ENCODE measurements at regions of chrX and their contacts with region 1.

Region 1: GRCh38 chrX:110450050-110450449 is 91.4 kb downstream of the RTL9 start:
- DNase-seq: peak; percentile 20
- ATAC-seq: peak; percentile 99
- H3K4me3 ChIP-seq: no peak overlapping the region
- H3K27ac ChIP-seq: no peak overlapping the region
- H3K4me1 ChIP-seq: no peaks in the 10 kb centered on the region
- H3K27me3 ChIP-seq: peaks cover 0 to 4% of the 10 kb centered on the region in 2 experiments; a peak in 2 of 4 replicates
- CTCF ChIP-seq: peak; percentile 78 to 85 (median 84)
- EP300 ChIP-seq: no peak
- POLR2A ChIP-seq: no peak
- RAD21 ChIP-seq: peak; percentile 89

Region 2: GRCh38 chrX:110358548-110358947 is 91.5 kb before region 1 on chrX and contains the start of gene RTL9:
- CTCF ChIA-PET with region 1: no interaction called
- POLR2A ChIA-PET with region 1: no interaction called
- RAD21 ChIA-PET with region 1: no interaction called
- SMC1A ChIA-PET with region 1: no interaction called
- in situ Hi-C with region 1: no loop called
- intact Hi-C with region 1: no loop called
- DNase-seq: no peak
- ATAC-seq: no peak
- H3K4me3 ChIP-seq: no peak within 1 kb of the TSS
- H3K27ac ChIP-seq: no peak within 1 kb of the TSS
- H3K4me1 ChIP-seq: no peaks in the 10 kb centered on the region
- H3K27me3 ChIP-seq: no peaks in the 10 kb centered on the region
- CTCF ChIP-seq: no peak
- EP300 ChIP-seq: no peak
- POLR2A ChIP-seq: no peak
- RAD21 ChIP-seq: no peak
- polyA plus RNA-seq, gene RTL9: 0.05 to 0.07 TPM

Region 3: GRCh38 chrX:110665223-110666002 is 215.4 kb after region 1 on chrX:
- CTCF ChIA-PET with region 1: no interaction called
- POLR2A ChIA-PET with region 1: no interaction called
- RAD21 ChIA-PET with region 1: no interaction called
- SMC1A ChIA-PET with region 1: no interaction called
- in situ Hi-C with region 1: no loop called
- intact Hi-C with region 1: loop called (anchors 1 kb)
- DNase-seq: no peak
- ATAC-seq: peak; percentile 97
- H3K4me3 ChIP-seq: no peak overlapping the region
- H3K27ac ChIP-seq: no peak overlapping the region
- H3K4me1 ChIP-seq: no peaks in the 10 kb centered on the region
- H3K27me3 ChIP-seq: no peaks in the 10 kb centered on the region; a peak in 1 of 4 replicates
- CTCF ChIP-seq: peak; percentile 42 to 69 (median 68)
- EP300 ChIP-seq: no peak
- POLR2A ChIP-seq: no peak
- RAD21 ChIP-seq: peak; percentile 42